Mammary epithelial cell (primary cell): ENCODE measurements at regions of chr19 and their contacts with region 1.

Region 1: DNA sequence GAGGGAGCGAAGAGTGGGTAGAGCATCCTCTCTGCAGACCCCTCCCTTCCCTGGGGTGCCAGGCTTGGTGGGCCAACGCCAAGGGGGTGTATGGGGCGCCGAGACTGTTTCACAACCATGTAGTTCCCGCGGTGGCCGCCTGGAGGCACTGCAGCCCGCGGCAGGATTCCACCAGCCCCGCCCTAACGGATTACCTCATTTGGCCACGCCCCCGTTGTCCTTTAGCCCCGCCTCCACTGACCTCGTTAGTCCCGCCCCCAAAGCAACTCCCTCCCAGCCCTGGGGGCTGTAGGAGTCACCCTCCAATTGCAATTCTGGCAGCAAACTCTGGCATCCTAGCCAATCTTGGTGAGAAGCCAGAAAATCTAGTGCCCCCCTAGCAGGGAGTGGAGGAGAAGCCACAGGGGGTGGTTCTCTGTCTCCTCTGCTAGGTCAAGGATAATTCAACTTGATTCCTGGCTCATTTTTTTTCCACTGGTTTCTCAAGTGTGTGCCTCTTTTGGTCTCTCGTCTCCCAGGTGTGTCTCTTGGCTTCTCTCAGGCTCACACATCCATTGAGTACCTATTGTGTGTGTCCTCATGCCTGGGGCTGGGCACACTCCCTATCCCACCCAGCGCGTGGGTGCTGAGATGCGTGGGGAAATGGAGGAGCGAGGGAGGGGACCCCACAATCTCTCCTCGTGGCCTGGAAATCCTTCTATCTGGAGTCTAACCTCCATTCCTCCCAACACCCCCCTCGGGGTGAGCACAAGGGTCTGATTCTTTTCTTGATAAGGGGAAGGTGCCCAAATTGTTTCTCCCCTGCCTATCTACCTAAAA is 2.0 kb downstream of the OLFM2 start:
- DNase-seq: peak; percentile 59
- H3K4me3 ChIP-seq: no peak overlapping the region
- H3K27ac ChIP-seq: no peak overlapping the region
- H3K4me1 ChIP-seq: no peaks in the 10 kb centered on the region
- H3K27me3 ChIP-seq: peaks cover 2% of the 10 kb centered on the region
- CTCF ChIP-seq: peak; percentile 82 to 95

Region 2: DNA sequence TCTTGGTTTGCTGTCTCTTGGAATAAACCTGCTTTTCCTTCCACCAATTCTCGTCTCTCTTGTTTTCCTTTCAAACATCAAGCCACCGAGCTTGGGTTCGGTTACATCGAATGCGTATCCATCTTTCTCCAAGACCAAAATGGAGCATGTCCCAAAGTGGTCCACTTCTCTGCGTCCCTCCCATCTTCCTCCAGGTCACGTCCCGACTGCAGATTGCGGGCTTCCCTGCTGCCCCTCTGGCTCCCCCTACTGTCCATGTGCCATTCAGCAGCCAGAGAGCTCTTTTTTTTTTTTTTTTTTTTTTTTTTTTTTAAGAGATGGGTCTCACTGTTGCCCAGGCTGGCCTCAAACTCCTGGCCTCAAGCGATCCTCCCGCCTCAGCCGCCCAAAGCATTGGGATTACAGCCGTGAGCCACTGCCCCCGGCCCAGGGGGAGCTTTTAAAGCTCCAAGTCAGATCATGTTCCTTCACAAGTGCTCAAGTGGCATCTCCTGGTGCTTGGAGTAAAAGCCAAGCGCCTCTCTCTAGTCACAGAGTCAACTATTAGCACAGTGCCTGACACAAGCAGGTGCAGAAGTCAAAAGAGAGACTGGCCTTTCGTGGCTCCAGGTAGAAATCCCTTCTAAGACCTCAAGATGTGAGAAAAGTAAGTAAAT is 66.0 kb after region 1 on chr19:
- CTCF ChIA-PET with region 1: no interaction called
- dilution Hi-C with region 1: loop called (anchors 5 kb)
- in situ Hi-C with region 1: loop called in 1 of 2 experiments (anchors 5 kb)
- intact Hi-C with region 1: loop called (anchors 1 kb)
- DNase-seq: peak; percentile 34
- H3K4me3 ChIP-seq: no peak overlapping the region
- H3K27ac ChIP-seq: no peak overlapping the region
- H3K4me1 ChIP-seq: no peaks in the 10 kb centered on the region
- H3K27me3 ChIP-seq: no peaks in the 10 kb centered on the region
- CTCF ChIP-seq: peak; percentile 79 to 88

Region 3: DNA sequence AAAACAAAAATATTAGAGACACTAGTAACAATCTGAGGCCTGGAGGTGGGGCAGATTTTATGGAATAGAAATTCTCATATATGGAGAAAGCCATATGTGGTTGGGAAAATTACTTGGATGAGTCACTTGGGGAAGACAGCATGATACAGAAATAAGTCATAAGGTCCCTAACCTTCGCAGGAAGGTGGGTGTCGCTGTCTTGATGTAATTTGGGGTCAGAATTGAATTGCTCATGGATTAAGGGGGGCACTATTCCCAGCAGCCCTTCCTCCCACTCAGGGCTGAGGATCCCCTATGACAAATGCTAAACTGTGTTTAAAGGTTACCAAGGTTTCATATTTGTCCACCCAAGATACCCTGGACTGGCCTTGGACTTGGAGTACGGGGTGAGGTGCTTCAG is 83.9 kb after region 1 on chr19:
- CTCF ChIA-PET with region 1: no interaction called
- dilution Hi-C with region 1: no loop called
- in situ Hi-C with region 1: loop called in 1 of 2 experiments (anchors 5 kb)
- intact Hi-C with region 1: no loop called
- DNase-seq: peak; percentile 63
- H3K4me3 ChIP-seq: no peak overlapping the region
- H3K27ac ChIP-seq: no peak overlapping the region
- H3K4me1 ChIP-seq: peaks cover 6% of the 10 kb centered on the region
- H3K27me3 ChIP-seq: no peaks in the 10 kb centered on the region
- CTCF ChIP-seq: no peak

Region 4: DNA sequence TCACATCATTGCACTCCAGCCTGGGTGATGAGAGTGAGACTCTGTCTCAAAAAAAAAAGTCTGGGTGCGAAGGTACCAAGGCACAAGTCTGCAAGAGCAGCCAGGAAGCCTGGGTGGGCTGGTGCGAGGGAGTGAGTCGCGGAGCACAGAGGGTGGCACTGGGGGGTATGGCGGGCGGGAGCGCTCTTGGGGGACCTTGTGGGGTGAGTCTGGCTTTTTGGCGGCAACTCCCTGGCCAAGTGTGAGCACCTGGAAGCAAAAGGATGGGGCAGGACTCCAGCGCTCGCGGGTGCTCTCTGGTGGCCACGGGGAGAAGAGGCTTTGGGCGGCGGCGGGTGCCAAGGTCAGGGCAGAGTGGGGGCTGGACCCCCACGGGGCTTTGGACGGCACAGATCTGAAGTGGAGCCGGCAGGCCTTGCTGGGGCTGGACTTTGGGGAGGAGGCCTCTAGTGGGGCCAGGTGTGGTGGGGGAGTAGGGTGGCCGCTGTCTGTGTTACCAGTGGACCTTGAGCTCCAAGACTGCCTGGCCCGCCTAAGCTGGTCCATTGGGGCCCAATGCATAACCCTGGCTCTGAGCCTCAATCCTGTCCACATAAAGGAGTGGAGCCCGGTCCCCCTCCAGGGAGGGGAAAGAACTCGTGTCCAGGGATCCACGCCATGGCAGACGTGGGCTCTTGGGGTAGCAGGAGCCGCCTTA is 178.7 kb after region 1 on chr19:
- CTCF ChIA-PET with region 1: no interaction called
- dilution Hi-C with region 1: no loop called
- in situ Hi-C with region 1: no loop called
- intact Hi-C with region 1: loop called (anchors 1 kb)
- DNase-seq: no peak
- H3K4me3 ChIP-seq: no peak overlapping the region
- H3K27ac ChIP-seq: no peak overlapping the region
- H3K4me1 ChIP-seq: peaks cover 5% of the 10 kb centered on the region
- H3K27me3 ChIP-seq: no peaks in the 10 kb centered on the region
- CTCF ChIP-seq: peak; percentile 44 to 77

Region 5: DNA sequence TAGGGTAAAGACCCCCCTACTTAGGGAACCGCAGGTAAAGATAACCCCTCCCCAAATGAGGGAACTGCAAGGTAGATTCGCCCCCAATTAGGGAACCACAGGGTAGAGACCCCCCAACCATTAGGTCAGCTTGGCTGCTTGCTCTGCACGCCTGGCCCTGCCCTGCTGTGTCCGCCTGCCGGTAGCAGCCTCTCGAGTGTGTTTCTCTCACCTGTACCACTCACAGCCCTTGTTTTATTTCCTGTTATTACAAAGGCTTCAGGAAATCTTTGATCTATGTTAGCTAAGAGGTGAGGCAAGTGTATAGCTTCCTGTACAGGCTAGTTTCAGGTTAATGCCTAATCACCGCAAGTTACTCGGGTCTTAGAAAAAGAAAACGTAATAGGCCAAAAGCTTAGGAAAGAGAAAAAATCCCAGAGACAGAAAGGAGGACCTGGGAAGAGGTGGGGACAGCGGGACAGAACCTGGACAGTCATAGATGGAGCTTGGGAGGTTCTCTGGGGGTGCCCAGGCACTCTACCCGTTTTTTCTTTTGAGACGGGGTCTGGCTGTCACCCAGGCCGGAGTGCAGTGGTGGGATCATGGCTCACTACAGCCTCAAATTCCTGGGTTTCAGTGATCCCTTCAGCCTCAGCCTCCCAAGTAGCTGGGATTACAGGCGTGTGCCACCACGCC is 208.5 kb after region 1 on chr19:
- CTCF ChIA-PET with region 1: no interaction called
- dilution Hi-C with region 1: no loop called
- in situ Hi-C with region 1: no loop called
- intact Hi-C with region 1: no loop called
- DNase-seq: no peak
- H3K4me3 ChIP-seq: no peak overlapping the region
- H3K27ac ChIP-seq: no peak overlapping the region
- H3K4me1 ChIP-seq: no peaks in the 10 kb centered on the region
- H3K27me3 ChIP-seq: no peaks in the 10 kb centered on the region
- CTCF ChIP-seq: no peak

Region 6: DNA sequence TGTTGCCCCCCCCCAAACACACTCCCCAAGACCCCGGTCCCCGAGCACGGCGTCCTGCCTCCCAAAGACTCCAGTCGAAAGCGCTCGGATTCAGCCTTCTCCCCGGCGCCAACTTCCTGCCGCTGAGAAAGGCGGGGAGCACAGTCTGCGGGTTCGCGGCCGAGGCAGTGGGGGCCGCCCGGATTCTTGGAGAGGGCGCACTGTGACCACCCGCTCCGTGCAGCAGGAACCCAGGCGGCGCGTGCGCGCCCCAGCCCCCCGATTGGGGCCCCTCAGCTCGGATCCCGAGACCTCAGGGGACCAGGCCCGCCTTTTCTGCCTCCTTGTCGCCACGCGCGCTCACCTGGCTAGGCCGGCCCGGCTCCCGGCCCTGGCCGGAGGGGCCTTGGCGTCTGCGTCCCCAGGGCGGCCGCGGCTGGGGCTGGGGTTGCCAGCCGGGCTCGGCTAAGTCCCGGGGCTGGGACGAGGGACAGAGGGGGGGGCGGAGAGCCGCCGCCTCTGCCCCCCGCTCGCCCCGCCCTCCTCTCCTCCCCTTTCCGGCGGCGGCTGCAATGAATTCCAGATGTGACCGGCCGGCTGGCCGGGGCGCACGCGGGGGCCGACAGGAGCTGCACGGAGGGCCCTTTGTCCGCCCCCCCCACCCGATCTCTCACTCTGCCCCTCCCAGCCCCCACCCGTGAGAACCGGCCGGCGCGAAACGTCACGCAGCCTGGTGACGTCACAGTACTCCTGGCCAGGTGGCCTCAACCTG is 296.7 kb after region 1 on chr19 and contains the start of gene S1PR2:
- CTCF ChIA-PET with region 1: no interaction called
- dilution Hi-C with region 1: loop called (anchors 25 kb)
- in situ Hi-C with region 1: no loop called
- intact Hi-C with region 1: no loop called
- DNase-seq: peak; percentile 57
- H3K4me3 ChIP-seq: peak within 1 kb of the TSS; percentile 71 to 99 (median 84)
- H3K27ac ChIP-seq: peak within 1 kb of the TSS; percentile 70
- H3K4me1 ChIP-seq: peaks cover 17% of the 10 kb centered on the region
- H3K27me3 ChIP-seq: no peaks in the 10 kb centered on the region
- CTCF ChIP-seq: no peak
- total RNA-seq, gene S1PR2: 5.6 to 15.3 TPM

Region 7: GRCh38 chr19:10380313-10381102 is 446.2 kb after region 1 on chr19 and contains the start of gene TYK2:
- CTCF ChIA-PET with region 1: no interaction called
- dilution Hi-C with region 1: no loop called
- in situ Hi-C with region 1: loop called (anchors 10 to 25 kb)
- intact Hi-C with region 1: no loop called
- DNase-seq: peak; percentile 99
- H3K4me3 ChIP-seq: peak within 1 kb of the TSS; percentile 81 to 99 (median 92)
- H3K27ac ChIP-seq: peak within 1 kb of the TSS; percentile 65
- H3K4me1 ChIP-seq: peaks cover 11% of the 10 kb centered on the region
- H3K27me3 ChIP-seq: no peaks in the 10 kb centered on the region
- CTCF ChIP-seq: no peak
- total RNA-seq, gene TYK2: 43.5 to 110 TPM